Left ventricle myocardium superior (tissue), 1 donor: ENCODE measurements at regions of chr5 and their contacts with region 1.

Region 1: GRCh38 chr5:157718519-157718918 is 12.7 kb upstream of the THG1L start:
- DNase-seq: no peak
- ATAC-seq: peak; percentile 95

Region 2: DNA sequence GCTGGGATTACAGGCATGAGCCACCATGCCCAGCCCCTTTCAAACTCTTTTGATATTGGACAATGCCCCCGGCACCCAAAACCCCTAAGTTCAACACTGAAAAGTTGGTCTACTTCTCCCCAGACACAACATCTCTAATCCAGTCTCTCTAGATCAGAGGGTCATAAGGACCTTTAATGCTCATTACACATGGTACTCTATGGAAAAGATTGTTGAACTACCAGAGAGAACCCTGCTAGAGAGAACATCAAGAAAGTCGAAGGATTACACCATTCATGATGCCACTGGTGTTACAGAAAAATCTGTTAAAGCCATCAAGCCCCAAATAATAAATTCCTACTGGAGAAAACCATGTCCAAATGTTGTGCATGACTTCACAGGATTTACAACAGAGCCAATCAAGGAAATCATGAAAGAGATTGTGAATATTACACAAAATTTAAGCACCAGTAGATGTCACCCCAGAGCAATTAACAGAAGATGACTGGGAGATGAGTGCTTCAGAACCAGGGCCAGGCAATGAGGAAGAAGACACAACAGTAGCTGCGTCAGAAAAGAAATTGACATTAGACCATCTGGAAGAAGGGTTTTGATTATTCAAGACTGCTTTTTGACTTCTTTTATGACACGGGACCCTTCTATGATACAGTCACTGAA is 286.8 kb before region 1 on chr5:
- intact Hi-C with region 1: loop called (anchors 5 kb)
- DNase-seq: no peak
- ATAC-seq: peak; percentile 83

Region 3: GRCh38 chr5:157582731-157583620 is 135.5 kb before region 1 on chr5:
- intact Hi-C with region 1: loop called (anchors 10 kb)
- DNase-seq: no peak
- ATAC-seq: peak; percentile 97

Region 4: DNA sequence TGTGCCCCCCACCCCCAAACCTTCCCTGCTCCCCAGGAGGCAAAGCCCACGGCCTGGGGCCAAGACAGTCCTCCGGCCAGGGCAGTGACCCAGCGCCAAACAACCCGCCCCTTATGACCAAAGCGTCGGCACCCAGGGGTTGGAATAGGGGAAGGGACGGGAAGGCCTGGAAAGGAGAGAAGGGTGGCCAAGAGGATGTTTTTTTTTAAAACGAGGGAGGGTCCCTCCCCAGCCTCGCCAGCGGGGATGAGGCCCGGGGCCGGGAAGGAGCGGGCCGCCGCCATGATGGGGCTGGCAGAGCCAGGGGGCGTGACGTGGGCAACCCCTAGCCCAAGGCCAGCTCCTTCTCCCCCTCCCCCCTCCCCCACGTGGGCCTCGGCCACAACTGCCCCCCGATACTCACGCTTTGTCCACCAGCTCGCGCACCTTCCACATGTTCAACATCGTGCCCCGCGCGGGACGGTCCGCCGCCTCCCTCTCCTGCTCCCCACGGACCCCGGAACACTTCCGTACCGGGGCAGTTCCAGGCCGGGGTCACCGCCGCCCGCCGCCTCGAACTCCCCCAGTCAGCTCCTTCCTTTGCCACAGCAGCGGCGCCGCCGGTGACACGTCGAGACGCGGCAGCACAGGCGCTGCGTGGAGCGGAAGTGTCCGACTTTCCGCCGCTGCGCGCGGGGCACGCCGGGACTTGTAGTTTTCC is 140.2 kb after region 1 on chr5 and contains the start of gene CLINT1:
- intact Hi-C with region 1: no loop called
- DNase-seq: peak; percentile 96
- ATAC-seq: peak; percentile 99
- total RNA-seq, gene CLINT1: 51.9 TPM